ENCODE measurements at regions of chr14 and their contacts with region 1.

Region 1: GRCh38 chr14:104137297-104138097 is 890 bp upstream of the KIF26A start:
- DNase-seq: peak in 9 of 10 donors; percentile 43 to 95 (median 65)

Region 2: GRCh38 chr14:104370256-104370870 is 232.9 kb after region 1 on chr14:
- intact Hi-C with region 1: loop called (anchors 5 kb)
- DNase-seq: peak in 7 of 10 donors; percentile 26 to 87 (median 36)

Region 3: DNA sequence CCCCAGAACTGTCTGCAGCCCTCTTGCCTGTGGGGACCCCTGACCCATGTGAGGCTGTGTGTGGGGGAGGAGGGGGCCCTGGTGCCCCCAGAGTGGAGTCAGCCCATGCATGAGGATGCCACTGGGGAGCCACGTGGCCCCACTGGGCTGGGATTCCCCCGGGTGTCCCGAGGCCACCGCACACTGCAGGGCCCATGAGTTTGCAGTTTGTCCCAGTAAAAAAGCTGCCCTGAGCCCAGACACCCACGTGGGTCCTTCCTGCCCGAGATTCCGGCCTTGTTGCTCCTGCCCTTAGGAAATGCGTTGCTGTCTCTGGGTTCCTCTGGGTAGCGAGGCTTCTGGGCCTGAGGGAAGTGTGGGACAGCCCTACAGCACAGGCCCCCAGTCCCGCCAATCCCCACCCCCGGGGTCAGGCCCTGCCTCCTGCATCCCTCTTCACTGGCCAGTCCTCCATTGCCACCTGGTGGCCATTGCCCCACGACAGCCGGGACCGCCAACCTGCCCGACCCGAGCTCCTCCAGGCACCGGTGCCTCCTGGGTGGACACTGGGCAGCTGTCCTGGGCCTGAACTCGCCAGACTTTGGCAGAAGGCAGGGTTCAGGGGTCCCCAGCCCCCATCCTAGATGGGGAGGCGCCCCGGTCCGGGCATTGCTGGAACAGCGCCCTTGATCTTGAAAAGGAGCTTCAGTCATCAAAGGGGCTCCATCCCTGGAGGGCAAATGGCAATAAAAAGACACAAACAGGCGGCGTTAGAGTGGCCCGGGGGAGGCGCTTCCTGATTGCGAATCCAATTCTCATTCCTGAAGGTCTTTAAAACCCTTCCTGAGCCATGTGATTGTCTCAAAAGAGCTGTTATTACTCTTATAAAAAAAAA is 426.5 kb after region 1 on chr14:
- intact Hi-C with region 1: loop called (anchors 1 kb)
- DNase-seq: peak; percentile 56 to 95 (median 78)

Region 4: DNA sequence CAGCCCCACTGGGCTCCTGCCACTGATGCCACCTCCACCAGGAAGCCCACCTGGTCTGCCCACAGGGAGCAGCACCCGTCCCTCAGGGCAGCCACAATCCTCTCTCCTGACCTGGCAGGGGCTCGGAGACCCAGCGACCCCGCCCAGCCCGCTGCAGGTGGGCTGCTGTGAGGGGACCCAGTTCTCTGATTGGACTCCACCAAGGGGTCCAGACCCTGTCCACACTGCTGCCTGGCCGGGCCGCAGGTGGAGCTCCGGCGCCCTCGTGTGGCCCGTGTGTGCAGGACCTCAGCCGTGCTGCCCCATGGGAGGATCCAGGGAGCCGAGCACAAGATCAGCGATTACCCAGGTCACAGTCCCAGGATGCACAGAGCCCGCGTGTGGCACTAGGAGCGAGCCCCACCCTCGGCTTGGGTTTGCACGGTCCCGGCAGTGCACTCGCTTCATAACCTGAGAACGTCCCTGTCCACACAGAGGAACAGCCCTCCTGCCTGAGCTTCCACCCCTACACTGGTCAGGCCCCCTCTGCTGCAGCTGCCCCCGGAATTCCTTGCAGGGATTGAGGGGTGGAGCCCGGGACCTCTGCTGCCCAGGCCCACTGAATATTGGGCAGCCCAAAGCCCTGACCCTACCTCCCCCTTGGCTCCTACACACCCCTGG is 502.5 kb after region 1 on chr14:
- intact Hi-C with region 1: loop called (anchors 1 kb)
- DNase-seq: peak; percentile 56 to 96 (median 76)